ENCODE measurements at regions of chr7 and their contacts with region 1.

Region 1: GRCh38 chr7:121081327-121081936 is 92.9 kb downstream of the CPED1 start:
- DNase-seq: peak; percentile 90
- ATAC-seq: peak; percentile 1
- H3K4me3 ChIP-seq: no peak overlapping the region
- H3K27ac ChIP-seq: no peak overlapping the region
- H3K4me1 ChIP-seq: peaks cover 74% of the 10 kb centered on the region
- H3K27me3 ChIP-seq: no peaks in the 10 kb centered on the region
- CTCF ChIP-seq: peak; percentile 78

Region 2: GRCh38 chr7:120857588-120858573 is 223.6 kb before region 1 on chr7 and contains the start of gene TSPAN12:
- CTCF ChIA-PET with region 1: no interaction called
- POLR2A ChIA-PET with region 1: no interaction called
- intact Hi-C with region 1: loop called (anchors 5 kb)
- DNase-seq: peak; percentile 70
- ATAC-seq: peak; percentile 85
- H3K4me3 ChIP-seq: peak within 1 kb of the TSS; percentile 88
- H3K27ac ChIP-seq: peak within 1 kb of the TSS; percentile 48
- H3K4me1 ChIP-seq: peaks cover 8% of the 10 kb centered on the region
- H3K27me3 ChIP-seq: no peaks in the 10 kb centered on the region
- CTCF ChIP-seq: peak; percentile 57
- total RNA-seq, gene TSPAN12: 7.2 and 8.3 TPM in 2 replicates

Region 3: DNA sequence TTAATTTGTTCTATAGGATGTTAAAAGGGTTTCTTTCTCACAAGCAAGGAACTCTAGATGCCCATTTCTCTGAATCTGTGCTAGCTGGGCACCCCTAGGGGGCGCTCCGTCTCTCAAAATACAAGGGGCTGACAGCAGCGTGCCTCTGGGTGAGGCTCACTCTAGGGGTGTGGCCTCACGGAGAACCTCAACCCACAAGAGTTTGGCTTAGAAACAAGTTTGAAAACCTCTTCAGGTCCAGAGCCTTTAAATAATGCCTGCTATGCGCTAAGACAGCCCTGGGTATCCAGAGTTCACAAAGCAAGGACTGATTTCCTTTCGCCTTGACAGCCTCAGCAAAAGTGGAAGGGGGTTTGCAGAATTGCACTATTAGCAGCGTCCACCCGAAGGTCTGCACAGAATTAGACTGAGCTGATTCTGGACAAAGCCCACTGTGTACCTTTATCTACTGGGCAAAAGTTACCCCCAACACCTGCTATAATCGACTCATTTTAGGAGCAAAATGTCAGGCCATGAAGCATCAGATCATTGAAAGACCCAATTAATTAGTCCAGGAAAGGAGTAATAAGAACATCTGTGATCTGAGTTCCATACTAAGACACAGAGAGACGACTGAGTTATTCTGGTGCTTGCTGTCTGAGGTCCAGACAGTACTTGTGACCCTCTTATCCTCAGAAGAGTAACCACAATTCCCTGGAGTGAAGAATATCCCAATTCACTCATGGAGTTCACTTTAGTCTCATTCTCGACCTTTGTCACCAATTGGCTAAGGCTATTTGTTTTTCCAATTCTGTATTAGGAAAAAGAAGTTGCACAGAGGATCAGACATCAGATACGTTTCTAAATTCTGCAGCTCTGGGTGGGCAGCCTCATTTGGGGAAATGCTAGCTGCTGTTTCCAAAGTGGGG is 93.5 kb before region 1 on chr7:
- CTCF ChIA-PET with region 1: interaction called, 7 read pairs
- POLR2A ChIA-PET with region 1: interaction called, 3 read pairs
- intact Hi-C with region 1: loop called (anchors 1 kb)
- DNase-seq: peak; percentile 90
- ATAC-seq: peak; percentile 83
- H3K4me3 ChIP-seq: peak overlapping the region; percentile 67
- H3K27ac ChIP-seq: no peak overlapping the region
- H3K4me1 ChIP-seq: peaks cover 40% of the 10 kb centered on the region
- H3K27me3 ChIP-seq: no peaks in the 10 kb centered on the region
- CTCF ChIP-seq: peak; percentile 97

Region 4: GRCh38 chr7:121049028-121049791 is 32.2 kb before region 1 on chr7:
- CTCF ChIA-PET with region 1: no interaction called
- POLR2A ChIA-PET with region 1: interaction called, 8 read pairs
- intact Hi-C with region 1: loop called (anchors 2 kb)
- DNase-seq: peak; percentile 16
- ATAC-seq: peak; percentile 80
- H3K4me3 ChIP-seq: no peak overlapping the region
- H3K27ac ChIP-seq: no peak overlapping the region
- H3K4me1 ChIP-seq: peaks cover 3% of the 10 kb centered on the region; the same call in 1 of the 2 replicates
- H3K27me3 ChIP-seq: no peaks in the 10 kb centered on the region
- CTCF ChIP-seq: no peak

Region 5: GRCh38 chr7:121107923-121108498 is 26.6 kb after region 1 on chr7:
- CTCF ChIA-PET with region 1: interaction called, 5 read pairs
- POLR2A ChIA-PET with region 1: no interaction called
- intact Hi-C with region 1: loop called (anchors 1 kb)
- DNase-seq: peak; percentile 87
- ATAC-seq: peak; percentile 98
- H3K4me3 ChIP-seq: no peak overlapping the region
- H3K27ac ChIP-seq: no peak overlapping the region
- H3K4me1 ChIP-seq: peaks cover 17% of the 10 kb centered on the region
- H3K27me3 ChIP-seq: no peaks in the 10 kb centered on the region
- CTCF ChIP-seq: peak; percentile 86